Astrocyte of the cerebellum (primary cell): ENCODE measurements at regions of chr1 and their contacts with region 1.

Region 1: GRCh38 chr1:12196641-12197482 is 30.1 kb downstream of the TNFRSF1B start:
- DNase-seq: no peak
- H3K4me3 ChIP-seq: no peak overlapping the region
- CTCF ChIP-seq: no peak

Region 2: DNA sequence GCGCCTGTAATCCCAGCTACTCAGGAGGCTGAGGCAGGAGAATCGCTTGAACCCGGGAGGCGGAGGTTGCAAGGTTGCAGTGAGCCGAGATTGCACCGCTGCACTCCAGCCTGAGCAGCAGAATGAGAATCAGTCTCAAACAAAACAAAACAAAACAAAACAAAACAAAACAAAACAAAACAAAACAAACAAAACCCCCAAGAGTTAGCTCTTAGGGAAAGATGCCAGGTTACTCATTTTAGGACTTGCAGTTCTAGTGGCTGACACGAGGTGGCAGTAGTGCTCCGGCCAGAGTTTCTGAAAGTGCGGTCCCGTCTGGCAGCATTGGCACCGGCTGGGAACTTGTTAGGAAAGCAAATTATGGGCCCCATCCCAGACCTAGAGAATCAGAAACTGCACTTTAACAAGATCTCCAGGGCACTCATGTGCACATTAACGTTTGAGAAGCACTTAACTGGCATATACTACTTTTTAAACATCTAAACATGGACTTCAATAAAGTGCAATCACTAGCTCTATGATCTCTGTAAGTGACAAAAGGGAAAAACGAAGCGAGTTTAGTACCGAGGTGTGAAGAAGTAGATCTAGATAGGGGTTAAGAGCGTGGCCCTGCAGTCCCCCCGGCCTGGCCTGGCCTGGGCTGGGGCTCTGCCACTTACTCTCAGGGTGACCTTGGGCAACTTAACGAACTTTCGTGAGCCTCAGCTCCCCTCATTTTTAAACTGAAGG is 72.0 kb before region 1 on chr1:
- in situ Hi-C with region 1: loop called (anchors 5 kb)
- DNase-seq: peak; percentile 43
- H3K4me3 ChIP-seq: no peak overlapping the region
- CTCF ChIP-seq: peak; percentile 95